ENCODE measurements at regions of chr16 and their contacts with region 1.

Region 1: GRCh38 chr16:5993356-5993755 is 895.8 kb upstream of the EEF2KMT start:
- DNase-seq: no peak
- H3K4me3 ChIP-seq: no peak overlapping the region
- H3K27ac ChIP-seq: no peak overlapping the region
- H3K4me1 ChIP-seq: no peaks in the 10 kb centered on the region
- H3K27me3 ChIP-seq: no peaks in the 10 kb centered on the region
- CTCF ChIP-seq: no peak

Region 2: DNA sequence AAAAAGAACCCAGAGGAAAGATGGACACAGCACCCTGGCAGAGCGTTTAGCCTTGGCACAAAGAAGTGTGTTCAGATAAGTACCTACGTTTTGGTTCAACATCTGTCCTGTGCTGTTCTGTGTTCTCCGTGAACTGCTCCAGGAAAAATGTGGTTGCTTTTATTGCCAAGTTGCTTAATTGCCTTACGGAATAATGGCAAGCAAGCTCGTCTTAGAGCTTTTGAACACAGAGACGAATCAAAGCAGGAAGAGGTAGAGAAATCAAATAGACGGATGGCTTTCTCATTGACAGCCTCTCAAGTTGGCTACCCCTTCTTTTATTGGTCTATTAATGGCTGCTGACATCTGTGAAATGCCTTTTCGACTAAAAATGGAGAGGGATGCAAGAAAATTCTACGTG is 15.3 kb after region 1 on chr16:
- CTCF ChIA-PET with region 1: no interaction called
- POLR2A ChIA-PET with region 1: interaction called, 28 read pairs
- intact Hi-C with region 1: no loop called
- DNase-seq: no peak
- H3K4me3 ChIP-seq: no peak overlapping the region
- H3K27ac ChIP-seq: no peak overlapping the region
- H3K4me1 ChIP-seq: no peaks in the 10 kb centered on the region
- H3K27me3 ChIP-seq: no peaks in the 10 kb centered on the region
- CTCF ChIP-seq: no peak

Region 3: DNA sequence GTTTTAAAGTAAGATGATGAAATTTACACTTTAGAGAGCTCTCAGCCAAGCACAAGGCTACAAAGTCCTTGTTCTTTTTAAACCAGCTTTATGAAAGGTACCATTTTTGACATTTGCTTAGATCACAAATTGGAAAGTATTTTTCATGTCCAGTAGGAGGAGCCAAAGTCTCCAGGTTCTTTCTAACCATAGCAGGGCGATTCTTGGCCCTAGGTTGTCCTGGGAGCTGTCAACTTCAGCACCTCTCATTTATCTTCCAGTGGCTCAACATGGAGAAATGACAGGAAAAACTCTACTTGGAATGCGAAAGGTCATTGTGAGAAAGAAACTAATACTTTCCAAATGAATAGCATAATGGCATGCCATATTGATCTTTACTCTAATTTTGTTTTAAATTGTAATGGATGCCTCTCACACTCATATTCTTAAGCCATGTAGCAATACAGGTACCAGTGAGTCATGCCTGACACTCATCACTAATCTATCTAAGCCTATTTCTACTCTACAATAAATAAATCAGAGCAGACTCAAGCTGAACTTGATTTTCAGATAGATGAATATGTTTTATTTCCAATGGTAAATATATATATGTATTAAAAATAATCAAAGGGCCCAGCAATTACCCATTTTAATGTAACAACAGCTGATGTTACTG is 23.3 kb after region 1 on chr16:
- CTCF ChIA-PET with region 1: interaction called, 18 read pairs
- POLR2A ChIA-PET with region 1: no interaction called
- intact Hi-C with region 1: no loop called
- DNase-seq: no peak
- H3K4me3 ChIP-seq: no peak overlapping the region
- H3K27ac ChIP-seq: no peak overlapping the region
- H3K4me1 ChIP-seq: no peaks in the 10 kb centered on the region
- H3K27me3 ChIP-seq: peaks cover 14% of the 10 kb centered on the region; the same call in 1 of the 2 replicates
- CTCF ChIP-seq: peak; percentile 54